Vagina (tissue), 2 donors: ENCODE measurements at regions of chr16 and their contacts with region 1.

Region 1: DNA sequence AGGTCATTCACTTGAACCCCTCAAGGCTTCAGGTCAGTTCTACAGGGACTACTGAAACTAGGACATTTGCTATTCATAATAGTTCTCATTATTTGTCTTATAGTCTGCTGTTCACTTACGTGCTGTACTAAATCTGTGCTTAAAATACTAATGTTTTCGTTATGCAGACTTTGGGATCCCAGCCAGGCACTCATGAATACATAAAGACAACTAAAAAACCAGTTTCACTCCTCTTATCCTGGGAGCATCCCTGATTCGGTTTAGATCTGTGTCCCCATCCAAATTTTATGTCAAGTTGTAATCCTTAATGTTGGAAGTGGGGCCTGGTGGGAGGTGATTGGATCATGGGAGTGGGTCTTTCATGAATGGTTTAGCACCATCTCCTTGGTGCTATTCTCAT is 1291.8 kb downstream of the CDH11 start:
- DNase-seq: no peak
- H3K4me3 ChIP-seq: no peak overlapping the region
- H3K27ac ChIP-seq: no peak overlapping the region
- H3K4me1 ChIP-seq: no peaks in the 10 kb centered on the region
- H3K27me3 ChIP-seq: no peaks in the 10 kb centered on the region
- CTCF ChIP-seq: no peak
- POLR2A ChIP-seq: no peak

Region 2: DNA sequence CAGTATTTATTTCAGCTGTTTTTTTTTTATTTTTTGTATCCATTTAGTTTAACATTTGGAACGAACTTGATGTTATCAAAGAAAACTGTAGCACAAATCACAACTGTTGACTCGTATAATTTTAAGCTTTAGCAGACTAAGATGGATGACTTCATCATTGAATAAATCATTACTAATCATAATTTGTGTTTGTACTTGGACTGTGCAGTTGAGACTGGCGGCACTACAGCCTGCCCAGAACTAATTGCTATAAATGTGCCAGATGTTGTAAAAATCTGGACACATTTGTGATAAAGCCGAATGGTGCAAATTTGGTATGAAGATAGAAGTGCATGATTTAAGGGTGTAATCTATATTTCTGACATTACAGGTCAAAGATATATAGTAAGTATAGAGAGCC is 896.1 kb before region 1 on chr16:
- intact Hi-C with region 1: no loop called
- DNase-seq: no peak
- H3K4me3 ChIP-seq: no peak overlapping the region
- H3K27ac ChIP-seq: no peak overlapping the region
- H3K4me1 ChIP-seq: no peaks in the 10 kb centered on the region
- H3K27me3 ChIP-seq: no peaks in the 10 kb centered on the region
- CTCF ChIP-seq: no peak
- POLR2A ChIP-seq: no peak

Region 3: DNA sequence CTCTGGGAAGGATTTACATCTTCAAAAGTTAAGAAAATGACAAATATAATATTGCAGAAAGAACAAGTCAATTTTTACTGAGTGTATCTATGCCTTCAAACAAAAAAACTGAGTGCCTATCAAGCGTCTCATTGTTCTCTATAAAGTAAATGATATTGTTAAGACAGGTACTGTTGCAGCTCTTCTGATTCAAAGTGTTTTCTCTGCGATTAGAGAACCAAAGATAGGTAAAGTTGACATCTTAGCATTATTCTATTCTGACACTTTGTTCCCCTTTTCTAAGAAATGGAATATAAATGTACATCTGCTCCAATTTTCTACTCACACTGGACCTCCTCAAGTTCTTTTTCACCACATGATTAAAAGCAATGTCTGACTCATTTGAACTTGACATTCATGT is 25.9 kb before region 1 on chr16:
- intact Hi-C with region 1: loop called (anchors 2 kb)
- DNase-seq: no peak
- H3K4me3 ChIP-seq: no peak overlapping the region
- H3K27ac ChIP-seq: no peak overlapping the region
- H3K4me1 ChIP-seq: no peaks in the 10 kb centered on the region
- H3K27me3 ChIP-seq: no peaks in the 10 kb centered on the region
- CTCF ChIP-seq: no peak
- POLR2A ChIP-seq: no peak